ENCODE measurements at regions of chr2 and their contacts with region 1.

Region 1: DNA sequence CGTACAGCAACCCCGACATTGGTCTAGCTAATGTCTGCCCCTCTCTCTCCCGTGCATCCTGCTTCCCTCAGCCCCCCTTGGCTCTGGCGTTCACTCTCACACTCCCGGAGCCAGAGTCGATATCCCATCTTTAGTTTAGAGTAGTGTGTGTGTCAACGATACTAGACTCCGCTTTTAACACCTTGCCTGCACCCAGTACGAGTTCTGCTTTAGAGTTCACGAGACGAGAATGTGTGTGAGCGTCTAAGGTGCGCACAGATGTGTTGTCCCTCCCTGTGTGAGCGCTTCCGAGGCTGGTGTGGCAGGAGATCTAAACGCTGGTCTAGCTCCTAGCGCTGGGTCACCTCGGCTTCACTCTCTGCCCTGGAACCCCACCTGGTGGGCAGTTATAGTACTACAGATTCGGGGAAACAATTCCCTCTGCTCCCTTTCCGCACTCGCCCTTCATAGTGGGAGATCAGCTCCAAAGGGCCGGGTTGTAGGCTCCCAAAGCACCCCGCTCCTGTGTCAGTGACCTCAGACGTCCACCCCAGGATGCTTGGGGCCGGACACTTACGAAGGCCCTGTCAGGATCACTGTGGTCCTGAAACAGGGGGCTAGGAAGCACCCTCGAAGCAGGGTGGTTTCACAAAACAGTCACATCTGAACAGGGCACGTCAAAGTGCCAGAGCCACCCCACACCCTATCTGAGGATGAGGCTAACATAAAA is 2.6 kb upstream of the CYP26B1 start:
- DNase-seq: peak; percentile 55 to 84
- ATAC-seq: peak; percentile 68 to 91 (median 80)
- H3K4me3 ChIP-seq: peak overlapping the region in 8 of 10 donors; percentile 18 to 75 (median 58)
- H3K27ac ChIP-seq: no peak overlapping the region
- H3K4me1 ChIP-seq: peaks cover 22 to 47% (median 42%) of the 10 kb centered on the region in 9 donors
- H3K27me3 ChIP-seq: peaks cover 15 to 83% (median 70%) of the 10 kb centered on the region in 7 donors
- CTCF ChIP-seq: peak; percentile 79 to 90 (median 85)

Region 2: GRCh38 chr2:70975091-70975636 is 1175.1 kb before region 1 on chr2:
- intact Hi-C with region 1: no loop called
- DNase-seq: no peak
- ATAC-seq: no peak
- H3K4me3 ChIP-seq: no peak overlapping the region
- H3K27ac ChIP-seq: no peak overlapping the region
- H3K4me1 ChIP-seq: peaks cover 6 to 28% (median 21%) of the 10 kb centered on the region in 9 donors
- H3K27me3 ChIP-seq: peaks cover 0 to 30% (median 0%) of the 10 kb centered on the region in 7 donors
- CTCF ChIP-seq: no peak

Region 3: GRCh38 chr2:71545572-71546274 is 604.6 kb before region 1 on chr2:
- intact Hi-C with region 1: loop called (anchors 1 to 5 kb)
- DNase-seq: peak in 1 of 2 donors; percentile 55
- ATAC-seq: peak; percentile 59 to 83 (median 78)
- H3K4me3 ChIP-seq: peak overlapping the region in 6 of 10 donors; percentile 15 to 30 (median 24)
- H3K27ac ChIP-seq: peak overlapping the region in 9 of 10 donors; percentile 34 to 79 (median 71)
- H3K4me1 ChIP-seq: peaks cover 0 to 17% (median 13%) of the 10 kb centered on the region in 9 donors
- H3K27me3 ChIP-seq: no peaks in the 10 kb centered on the region
- CTCF ChIP-seq: peak; percentile 66 to 83 (median 75)

Region 4: GRCh38 chr2:71614976-71615766 is 535.1 kb before region 1 on chr2:
- intact Hi-C with region 1: loop called in 4 of 10 experiments (anchors 5 to 10 kb)
- DNase-seq: peak; percentile 91
- ATAC-seq: peak; percentile 91 to 96 (median 94)
- H3K4me3 ChIP-seq: no peak overlapping the region
- H3K27ac ChIP-seq: peak overlapping the region; percentile 76 to 95 (median 90)
- H3K4me1 ChIP-seq: peaks cover 26 to 54% (median 43%) of the 10 kb centered on the region in 9 donors
- H3K27me3 ChIP-seq: no peaks in the 10 kb centered on the region
- CTCF ChIP-seq: no peak

Region 5: DNA sequence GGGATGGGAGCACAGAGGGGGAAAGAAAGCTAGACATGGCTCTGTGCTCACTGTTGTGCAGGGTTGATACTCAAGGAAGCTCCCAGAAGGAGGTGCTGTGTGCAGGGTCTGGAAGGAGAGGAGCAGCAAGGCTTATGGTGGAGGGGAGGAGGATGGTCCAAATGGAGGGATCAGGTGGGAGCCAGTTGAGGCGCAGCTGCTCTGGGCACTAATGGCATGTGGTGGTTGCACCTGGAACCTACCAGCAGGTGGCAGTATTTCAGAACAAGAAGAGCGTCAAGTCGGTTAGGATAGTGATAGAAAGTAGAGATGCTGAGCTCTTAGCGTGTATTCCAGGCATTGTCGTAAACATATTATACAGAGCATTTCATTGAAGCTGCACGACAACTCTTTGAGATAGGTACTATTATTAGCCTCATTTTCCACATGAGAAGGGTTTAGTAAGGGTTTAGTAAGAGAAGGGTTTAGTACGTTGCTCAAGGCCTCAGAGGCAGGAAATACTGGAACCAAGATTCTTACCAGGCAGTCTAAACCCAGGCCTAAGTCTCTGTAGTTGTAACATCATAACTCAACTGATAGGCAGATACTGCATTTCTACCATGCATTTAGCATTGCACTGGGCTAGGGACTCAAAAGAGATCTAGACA is 226.3 kb before region 1 on chr2:
- intact Hi-C with region 1: loop called (anchors 1 to 5 kb)
- DNase-seq: peak in 1 of 2 donors; percentile 68
- ATAC-seq: peak; percentile 62 to 91 (median 76)
- H3K4me3 ChIP-seq: no peak overlapping the region
- H3K27ac ChIP-seq: no peak overlapping the region
- H3K4me1 ChIP-seq: peaks cover 0 to 4% (median 0%) of the 10 kb centered on the region in 9 donors
- H3K27me3 ChIP-seq: no peaks in the 10 kb centered on the region
- CTCF ChIP-seq: peak; percentile 72 to 89 (median 86)

Region 6: DNA sequence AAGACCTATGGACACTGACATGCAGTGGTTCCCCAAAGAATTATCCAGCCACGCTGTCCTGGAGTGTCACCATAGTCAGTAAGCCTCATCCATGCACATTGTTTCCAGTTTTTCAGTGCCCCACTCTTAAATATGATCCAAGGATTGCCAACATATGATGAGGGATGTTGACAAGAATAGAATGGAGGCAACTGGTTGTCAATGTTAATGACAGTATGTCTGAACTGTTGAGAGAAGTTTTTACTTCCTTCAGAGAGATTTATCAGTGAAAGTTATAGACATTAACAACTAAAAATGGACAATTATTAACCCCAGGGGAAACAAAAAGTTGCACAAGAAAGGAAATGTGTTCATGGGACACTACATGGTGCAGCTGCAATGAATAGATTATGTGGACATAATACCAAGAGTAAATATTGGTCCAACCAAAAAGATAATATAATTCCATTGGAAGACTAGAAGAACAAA is 72.6 kb before region 1 on chr2:
- intact Hi-C with region 1: no loop called
- DNase-seq: no peak
- ATAC-seq: no peak
- H3K4me3 ChIP-seq: no peak overlapping the region
- H3K27ac ChIP-seq: no peak overlapping the region
- H3K4me1 ChIP-seq: no peaks in the 10 kb centered on the region
- H3K27me3 ChIP-seq: peaks cover 0 to 5% (median 0%) of the 10 kb centered on the region in 7 donors
- CTCF ChIP-seq: no peak

Region 7: GRCh38 chr2:72579591-72580180 is 429.4 kb after region 1 on chr2:
- intact Hi-C with region 1: loop called in 5 of 10 experiments (anchors 5 to 10 kb)
- DNase-seq: no peak
- ATAC-seq: peak in 4 of 8 donors; percentile 11 to 59 (median 30)
- H3K4me3 ChIP-seq: no peak overlapping the region
- H3K27ac ChIP-seq: no peak overlapping the region
- H3K4me1 ChIP-seq: peaks cover 0 to 39% (median 11%) of the 10 kb centered on the region in 9 donors
- H3K27me3 ChIP-seq: no peaks in the 10 kb centered on the region
- CTCF ChIP-seq: peak; percentile 53 to 83 (median 67)

Region 8: DNA sequence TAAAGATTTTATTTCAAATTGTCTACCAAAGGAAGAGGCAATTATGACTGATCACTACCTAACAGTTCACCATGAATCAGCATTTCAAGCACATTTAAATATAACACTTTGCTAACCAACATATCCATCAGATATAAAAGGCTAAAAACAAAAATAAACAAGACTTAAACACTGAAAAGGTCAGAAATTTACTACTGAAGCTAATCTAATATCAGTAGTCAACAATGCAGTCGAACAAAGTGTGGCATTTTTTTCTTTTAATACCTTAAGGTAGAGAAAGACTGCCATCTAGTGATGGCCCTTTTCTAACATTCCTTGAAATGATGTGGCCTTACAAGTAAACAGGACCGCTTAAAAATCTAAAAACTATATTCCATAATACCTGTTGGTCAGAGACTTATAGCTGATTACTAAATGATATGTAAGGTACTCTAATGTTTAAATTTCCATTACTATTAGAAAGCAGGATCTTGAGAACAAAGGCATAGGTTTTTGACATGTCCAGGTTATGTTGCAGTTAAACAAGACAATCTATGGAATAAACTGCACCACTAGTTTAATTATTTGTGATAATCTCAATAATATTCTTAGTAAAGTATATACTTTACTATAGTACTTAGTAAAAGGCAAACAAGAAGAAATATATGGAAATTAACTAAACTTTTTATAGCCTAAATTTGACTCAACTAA is 595.5 kb after region 1 on chr2:
- intact Hi-C with region 1: loop called in 3 of 10 experiments (anchors 2 to 10 kb)
- DNase-seq: peak in 1 of 2 donors; percentile 13
- ATAC-seq: peak in 5 of 8 donors; percentile 33 to 65 (median 39)
- H3K4me3 ChIP-seq: no peak overlapping the region
- H3K27ac ChIP-seq: no peak overlapping the region
- H3K4me1 ChIP-seq: peaks cover 0 to 63% (median 33%) of the 10 kb centered on the region in 9 donors
- H3K27me3 ChIP-seq: no peaks in the 10 kb centered on the region
- CTCF ChIP-seq: peak; percentile 32 to 82 (median 73)

Measured in heart right ventricle (tissue), 16 donors.